Endothelial cell of umbilical vein (primary cell): ENCODE measurements at regions of chr1 and their contacts with region 1.

Region 1: DNA sequence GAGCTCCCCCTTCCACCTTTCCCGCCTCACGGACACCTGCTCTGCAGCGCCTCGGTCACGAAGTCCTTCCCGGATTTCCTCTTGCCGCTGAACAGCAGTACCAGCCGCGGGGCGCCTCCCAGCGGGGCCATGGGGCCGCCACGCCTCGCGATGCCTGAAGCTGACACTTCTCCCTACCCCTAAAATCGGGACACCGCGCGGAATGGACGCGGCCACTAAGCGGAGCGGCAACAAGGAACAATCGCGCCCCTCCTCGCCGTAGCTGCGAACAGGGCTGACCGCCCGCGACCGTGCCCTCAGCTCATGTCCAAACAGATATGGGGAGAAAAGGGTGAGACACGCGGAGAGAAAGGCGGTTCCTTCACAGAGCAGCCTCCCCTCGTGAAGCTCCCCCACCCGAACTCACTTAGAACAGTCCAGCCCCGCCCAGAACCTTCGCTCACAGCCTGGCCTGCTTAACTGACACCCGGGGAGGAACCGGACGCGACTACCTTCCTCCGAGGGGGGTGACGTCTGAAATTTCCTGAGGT is at the start of gene PMVK:
- DNase-seq: peak; percentile 94
- H3K4me3 ChIP-seq: peak within 1 kb of the TSS; percentile 26 to 79 (median 55)
- H3K27ac ChIP-seq: peak within 1 kb of the TSS; percentile 92
- H3K4me1 ChIP-seq: peaks cover 8% of the 10 kb centered on the region
- H3K27me3 ChIP-seq: no peaks in the 10 kb centered on the region
- CTCF ChIP-seq: peak in 1 of 2 donors; percentile 36
- POLR2A ChIP-seq: peak; percentile 73
- total RNA-seq, gene PMVK: 22.6 and 23.0 TPM in 2 replicates

Region 2: GRCh38 chr1:154831462-154831861 is 105.2 kb before region 1 on chr1:
- CTCF ChIA-PET with region 1: no interaction called
- POLR2A ChIA-PET with region 1: no interaction called
- dilution Hi-C with region 1: no loop called
- intact Hi-C with region 1: no loop called
- DNase-seq: peak; percentile 29
- H3K4me3 ChIP-seq: no peak overlapping the region
- H3K27ac ChIP-seq: no peak overlapping the region
- H3K4me1 ChIP-seq: peaks cover 9% of the 10 kb centered on the region
- H3K27me3 ChIP-seq: peaks cover 0 to 1% of the 10 kb centered on the region in 2 experiments
- CTCF ChIP-seq: no peak
- POLR2A ChIP-seq: no peak

Region 3: DNA sequence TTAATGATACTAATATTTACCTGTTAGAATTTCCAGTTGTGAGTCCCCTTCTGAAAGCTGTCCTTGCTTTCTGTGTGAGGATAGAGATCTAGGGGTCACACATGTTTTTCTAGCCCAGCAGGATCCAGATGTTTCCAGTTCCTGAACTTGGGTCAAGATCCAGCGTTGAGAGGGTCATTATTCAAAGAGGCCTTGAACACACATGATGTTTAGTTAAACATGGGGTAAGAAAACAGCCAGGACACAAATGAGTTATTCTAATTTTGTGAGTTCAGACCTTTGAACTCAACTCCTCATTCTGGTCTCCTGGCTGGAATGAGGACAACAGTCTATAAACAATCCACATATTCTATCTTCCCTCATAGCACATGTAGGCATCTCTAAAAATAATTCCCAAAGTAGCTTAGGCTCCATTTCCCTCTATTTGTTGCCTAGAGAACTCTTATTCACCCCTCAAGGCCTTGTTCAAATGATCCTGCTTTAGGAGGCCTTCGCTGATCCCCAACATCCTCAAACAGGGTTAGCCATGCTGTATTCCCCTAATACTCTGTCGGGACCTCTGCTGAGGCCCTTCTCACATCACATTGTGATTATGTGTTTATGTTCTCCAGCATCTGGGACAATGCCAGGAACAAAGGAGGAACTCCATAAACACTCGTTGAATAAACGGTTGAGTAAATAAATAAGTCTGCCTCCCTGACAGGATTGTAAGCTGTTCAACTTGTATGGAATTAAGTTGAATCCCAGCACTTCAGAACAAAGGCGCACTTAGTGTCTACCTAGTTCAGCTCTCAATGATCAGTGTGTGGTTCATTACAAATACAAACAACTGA is 51.5 kb before region 1 on chr1:
- CTCF ChIA-PET with region 1: interaction called, 7 read pairs
- POLR2A ChIA-PET with region 1: interaction called, 6 read pairs
- dilution Hi-C with region 1: no loop called
- intact Hi-C with region 1: loop called (anchors 1 kb)
- DNase-seq: peak; percentile 92
- H3K4me3 ChIP-seq: no peak overlapping the region
- H3K27ac ChIP-seq: peak overlapping the region; percentile 32
- H3K4me1 ChIP-seq: peaks cover 18% of the 10 kb centered on the region
- H3K27me3 ChIP-seq: peaks cover 0 to 6% of the 10 kb centered on the region in 2 experiments
- CTCF ChIP-seq: no peak
- POLR2A ChIP-seq: peak; percentile 54

Region 4: DNA sequence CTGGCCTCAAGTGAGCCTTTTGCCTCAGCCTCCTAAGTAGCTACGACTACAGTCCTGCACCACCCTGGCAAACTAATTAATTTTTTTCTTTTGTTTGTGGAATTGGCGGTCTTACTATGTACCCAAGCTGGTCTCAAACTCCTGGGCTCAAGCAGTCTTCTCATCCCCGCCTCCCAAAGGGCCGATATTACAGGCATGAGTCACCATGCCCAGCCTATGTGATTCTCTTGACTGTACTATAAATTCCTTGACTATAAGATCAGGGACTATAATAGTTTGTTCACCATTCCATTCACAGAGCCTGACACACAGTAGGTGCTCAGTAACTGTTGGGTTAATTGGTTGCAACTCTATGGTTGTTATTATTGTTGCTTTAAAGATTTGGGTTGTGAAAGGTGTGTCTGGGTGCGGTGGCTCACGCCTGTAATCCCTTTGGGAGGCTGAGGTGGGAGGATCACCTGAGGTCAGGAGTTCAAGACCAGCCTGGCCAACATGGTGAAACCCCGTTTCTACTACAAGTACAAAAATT is 769.5 kb after region 1 on chr1:
- CTCF ChIA-PET with region 1: no interaction called
- POLR2A ChIA-PET with region 1: no interaction called
- dilution Hi-C with region 1: no loop called
- intact Hi-C with region 1: no loop called
- DNase-seq: no peak
- H3K4me3 ChIP-seq: no peak overlapping the region
- H3K27ac ChIP-seq: no peak overlapping the region
- H3K4me1 ChIP-seq: no peaks in the 10 kb centered on the region
- H3K27me3 ChIP-seq: no peaks in the 10 kb centered on the region
- CTCF ChIP-seq: no peak
- POLR2A ChIP-seq: no peak